Endothelial cell of umbilical vein (primary cell): ENCODE measurements at regions of chr10 and their contacts with region 1.

Region 1: GRCh38 chr10:52215745-52216361 is 98.2 kb upstream of the DKK1 start:
- DNase-seq: peak; percentile 79
- H3K4me3 ChIP-seq: no peak overlapping the region
- H3K27ac ChIP-seq: no peak overlapping the region
- H3K4me1 ChIP-seq: no peaks in the 10 kb centered on the region
- H3K27me3 ChIP-seq: no peaks in the 10 kb centered on the region
- CTCF ChIP-seq: peak; percentile 51 to 57
- POLR2A ChIP-seq: no peak

Region 2: GRCh38 chr10:51001587-51001986 is 1214.3 kb before region 1 on chr10:
- CTCF ChIA-PET with region 1: interaction called, 15 read pairs
- POLR2A ChIA-PET with region 1: no interaction called
- dilution Hi-C with region 1: no loop called
- intact Hi-C with region 1: no loop called
- DNase-seq: peak; percentile 36
- H3K4me3 ChIP-seq: no peak overlapping the region
- H3K27ac ChIP-seq: no peak overlapping the region
- H3K4me1 ChIP-seq: no peaks in the 10 kb centered on the region
- H3K27me3 ChIP-seq: peaks cover 0 to 15% of the 10 kb centered on the region in 2 experiments
- CTCF ChIP-seq: peak; percentile 17 to 40
- POLR2A ChIP-seq: no peak

Region 3: GRCh38 chr10:51389415-51390321 is 826.2 kb before region 1 on chr10:
- CTCF ChIA-PET with region 1: interaction called, 17 read pairs
- POLR2A ChIA-PET with region 1: no interaction called
- dilution Hi-C with region 1: no loop called
- intact Hi-C with region 1: loop called (anchors 1 kb)
- DNase-seq: peak; percentile 48
- H3K4me3 ChIP-seq: no peak overlapping the region
- H3K27ac ChIP-seq: no peak overlapping the region
- H3K4me1 ChIP-seq: no peaks in the 10 kb centered on the region
- H3K27me3 ChIP-seq: no peaks in the 10 kb centered on the region
- CTCF ChIP-seq: peak; percentile 79 to 85
- POLR2A ChIP-seq: no peak

Region 4: GRCh38 chr10:51960494-51960895 is 255.4 kb before region 1 on chr10:
- CTCF ChIA-PET with region 1: interaction called, 4 read pairs
- POLR2A ChIA-PET with region 1: no interaction called
- dilution Hi-C with region 1: no loop called
- intact Hi-C with region 1: loop called (anchors 1 kb)
- DNase-seq: peak; percentile 52
- H3K4me3 ChIP-seq: no peak overlapping the region
- H3K27ac ChIP-seq: no peak overlapping the region
- H3K4me1 ChIP-seq: no peaks in the 10 kb centered on the region
- H3K27me3 ChIP-seq: no peaks in the 10 kb centered on the region
- CTCF ChIP-seq: peak; percentile 33 to 34
- POLR2A ChIP-seq: no peak

Region 5: DNA sequence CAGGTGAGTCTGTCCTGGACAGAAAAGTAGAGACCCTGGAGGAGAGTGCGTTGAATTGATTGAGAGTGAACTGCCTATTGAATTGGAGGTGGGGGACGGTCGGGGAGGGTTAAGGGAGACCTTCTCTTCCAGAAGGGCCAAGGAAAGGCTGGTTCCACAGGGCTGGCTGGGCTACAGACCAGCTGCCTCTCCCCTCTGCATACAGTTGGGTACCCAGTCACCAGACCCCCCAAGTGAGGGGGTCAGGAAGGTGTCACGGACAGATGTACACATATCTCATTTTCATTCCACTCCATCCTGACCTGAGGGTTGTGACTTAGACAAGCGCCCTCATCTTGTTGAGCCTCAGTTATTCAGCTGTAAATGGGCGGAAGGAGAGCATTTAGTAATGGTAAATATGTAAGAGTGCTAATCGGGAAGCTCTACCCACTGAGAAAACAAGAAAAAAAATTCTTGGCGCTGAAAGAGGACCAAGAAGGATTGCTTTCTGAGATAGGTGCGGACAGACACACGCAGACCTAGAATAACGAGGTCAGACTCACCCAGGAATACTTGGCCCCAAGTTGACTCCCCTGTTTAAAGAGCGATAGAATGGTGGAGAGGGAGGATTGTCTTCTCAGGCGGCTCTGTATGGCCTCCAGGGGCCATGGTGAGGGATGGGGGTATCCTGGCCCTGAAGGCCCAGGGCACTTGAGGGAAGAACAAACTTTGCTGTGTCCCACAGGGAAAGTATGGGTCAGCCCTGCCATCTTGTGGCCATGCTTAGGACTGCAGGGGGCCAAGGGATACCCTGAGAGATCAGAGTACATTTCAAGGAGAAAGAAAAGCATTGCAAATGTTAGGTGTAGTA is 563.9 kb after region 1 on chr10:
- CTCF ChIA-PET with region 1: no interaction called
- POLR2A ChIA-PET with region 1: no interaction called
- dilution Hi-C with region 1: no loop called
- intact Hi-C with region 1: loop called (anchors 5 kb)
- DNase-seq: peak; percentile 70
- H3K4me3 ChIP-seq: no peak overlapping the region
- H3K27ac ChIP-seq: no peak overlapping the region
- H3K4me1 ChIP-seq: no peaks in the 10 kb centered on the region
- H3K27me3 ChIP-seq: peaks cover 5 to 10% of the 10 kb centered on the region in 2 experiments
- CTCF ChIP-seq: peak; percentile 88 to 94
- POLR2A ChIP-seq: no peak